Transverse colon (tissue), 4 donors: ENCODE measurements at regions of chr7 and their contacts with region 1.

Region 1: DNA sequence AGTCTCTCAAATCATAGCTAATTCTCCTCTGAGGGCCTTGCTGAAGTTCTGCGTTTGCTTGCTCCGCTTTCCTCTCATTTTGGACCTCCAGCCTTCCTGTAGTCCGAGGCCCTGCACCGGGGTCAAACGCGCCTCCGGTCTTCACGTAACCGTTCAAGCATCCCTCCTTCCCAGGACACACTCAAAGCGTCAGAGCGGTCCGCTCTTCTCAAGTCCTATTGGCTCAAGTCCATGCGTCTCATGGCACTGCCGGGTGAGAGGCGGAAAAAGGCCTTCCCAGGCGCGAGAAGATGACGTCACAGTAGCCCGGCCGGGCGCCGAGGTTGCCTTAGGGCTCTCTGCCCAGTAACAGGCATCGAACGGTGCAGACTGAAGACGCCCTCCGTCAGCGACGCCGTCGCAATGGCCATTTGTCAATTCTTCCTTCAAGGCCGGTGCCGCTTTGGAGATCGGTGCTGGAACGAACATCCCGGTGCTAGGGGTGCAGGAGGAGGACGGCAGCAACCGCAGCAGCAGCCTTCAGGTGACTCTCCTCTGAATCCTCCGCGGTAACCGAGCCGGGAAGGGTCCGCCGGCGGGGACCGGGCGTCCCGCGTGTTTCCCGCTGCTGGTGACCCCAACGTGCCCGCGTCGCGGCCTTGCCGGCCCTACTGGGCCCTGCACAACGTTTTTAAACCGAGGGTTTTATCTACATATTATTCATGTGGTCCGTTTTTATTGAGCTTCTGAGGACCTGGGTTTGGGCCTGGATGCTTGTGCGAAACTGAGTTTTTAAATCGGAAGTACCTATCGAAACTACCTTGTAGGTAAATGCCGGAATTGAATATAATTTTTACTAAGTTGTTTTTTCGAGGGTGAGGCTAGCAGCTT is at the start of gene NUP42:
- DNase-seq: peak; percentile 97
- H3K4me3 ChIP-seq: peak within 1 kb of the TSS; percentile 71 to 90 (median 83)
- H3K27ac ChIP-seq: peak within 1 kb of the TSS; percentile 96 to 97 (median 96)
- H3K4me1 ChIP-seq: peaks cover 8 to 30% (median 16%) of the 10 kb centered on the region in 4 donors
- H3K27me3 ChIP-seq: no peaks in the 10 kb centered on the region
- CTCF ChIP-seq: no peak
- EP300 ChIP-seq: no peak
- POLR2A ChIP-seq: peak; percentile 84
- total RNA-seq, gene NUP42: 27.6 to 47.0 (median 38.3) TPM

Region 2: GRCh38 chr7:23105644-23106056 is 76.3 kb before region 1 on chr7 and contains the start of gene KLHL7:
- in situ Hi-C with region 1: loop called in 2 of 4 experiments (anchors 10 kb)
- intact Hi-C with region 1: loop called (anchors 5 kb)
- DNase-seq: peak; percentile 98
- H3K4me3 ChIP-seq: peak within 1 kb of the TSS; percentile 67 to 94 (median 88)
- H3K27ac ChIP-seq: peak within 1 kb of the TSS; percentile 90 to 99 (median 94)
- H3K4me1 ChIP-seq: peaks cover 5 to 33% (median 17%) of the 10 kb centered on the region in 4 donors
- H3K27me3 ChIP-seq: no peaks in the 10 kb centered on the region
- CTCF ChIP-seq: peak in 1 of 5 experiments; percentile 4
- EP300 ChIP-seq: no peak
- POLR2A ChIP-seq: peak; percentile 94
- total RNA-seq, gene KLHL7: 9.2 to 27.4 (median 25.3) TPM

Region 3: GRCh38 chr7:23216021-23216420 is 34.1 kb after region 1 on chr7:
- in situ Hi-C with region 1: no loop called
- intact Hi-C with region 1: no loop called
- DNase-seq: peak; percentile 26
- H3K4me3 ChIP-seq: no peak overlapping the region
- H3K27ac ChIP-seq: no peak overlapping the region
- H3K4me1 ChIP-seq: peaks cover 0 to 17% (median 2%) of the 10 kb centered on the region in 4 donors
- H3K27me3 ChIP-seq: no peaks in the 10 kb centered on the region
- CTCF ChIP-seq: no peak
- EP300 ChIP-seq: no peak
- POLR2A ChIP-seq: no peak

Region 4: DNA sequence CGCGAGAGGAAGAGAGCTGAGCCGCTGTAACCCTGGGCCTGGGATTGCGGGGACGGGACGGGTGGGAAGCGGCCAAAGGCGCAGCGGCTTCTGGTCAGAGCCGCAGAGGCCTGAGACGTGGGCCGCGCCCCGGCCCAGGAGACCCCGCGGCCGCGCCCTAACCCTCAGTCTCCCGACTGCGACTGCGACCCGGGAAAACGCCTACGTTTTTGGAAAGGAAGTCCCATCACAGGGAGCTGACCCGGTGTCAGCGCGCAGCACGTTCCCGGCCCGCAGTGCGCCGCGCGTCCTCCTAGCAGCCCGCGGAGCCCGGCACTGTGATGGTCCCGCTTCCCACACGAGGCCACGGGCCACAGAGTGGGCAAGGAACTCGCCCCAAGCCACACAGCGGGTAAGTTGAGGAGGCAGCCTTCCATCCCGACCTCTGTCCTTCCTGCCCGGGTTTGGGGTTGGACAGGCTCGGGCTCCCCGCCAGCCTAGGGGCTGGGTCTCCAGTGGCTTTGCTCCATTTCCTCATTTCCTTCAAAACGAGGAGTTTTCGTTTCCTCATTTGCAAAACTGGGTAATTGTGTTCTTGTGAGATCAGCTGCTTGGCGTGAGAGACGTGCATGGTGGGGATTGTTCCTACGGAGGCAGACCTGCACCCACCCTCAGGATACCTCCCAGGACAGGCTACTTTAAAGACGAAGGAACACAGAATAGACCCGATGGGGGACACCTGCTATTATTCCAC is 65.8 kb after region 1 on chr7:
- in situ Hi-C with region 1: no loop called
- intact Hi-C with region 1: loop called (anchors 10 kb)
- DNase-seq: peak; percentile 21
- H3K4me3 ChIP-seq: peak overlapping the region in 3 of 4 donors; percentile 14 to 42 (median 25)
- H3K27ac ChIP-seq: peak overlapping the region; percentile 57 to 76 (median 70)
- H3K4me1 ChIP-seq: peaks cover 0 to 2% (median 0%) of the 10 kb centered on the region in 4 donors
- H3K27me3 ChIP-seq: peaks cover 59% of the 10 kb centered on the region
- CTCF ChIP-seq: no peak
- EP300 ChIP-seq: no peak
- POLR2A ChIP-seq: peak; percentile 18

Region 5: DNA sequence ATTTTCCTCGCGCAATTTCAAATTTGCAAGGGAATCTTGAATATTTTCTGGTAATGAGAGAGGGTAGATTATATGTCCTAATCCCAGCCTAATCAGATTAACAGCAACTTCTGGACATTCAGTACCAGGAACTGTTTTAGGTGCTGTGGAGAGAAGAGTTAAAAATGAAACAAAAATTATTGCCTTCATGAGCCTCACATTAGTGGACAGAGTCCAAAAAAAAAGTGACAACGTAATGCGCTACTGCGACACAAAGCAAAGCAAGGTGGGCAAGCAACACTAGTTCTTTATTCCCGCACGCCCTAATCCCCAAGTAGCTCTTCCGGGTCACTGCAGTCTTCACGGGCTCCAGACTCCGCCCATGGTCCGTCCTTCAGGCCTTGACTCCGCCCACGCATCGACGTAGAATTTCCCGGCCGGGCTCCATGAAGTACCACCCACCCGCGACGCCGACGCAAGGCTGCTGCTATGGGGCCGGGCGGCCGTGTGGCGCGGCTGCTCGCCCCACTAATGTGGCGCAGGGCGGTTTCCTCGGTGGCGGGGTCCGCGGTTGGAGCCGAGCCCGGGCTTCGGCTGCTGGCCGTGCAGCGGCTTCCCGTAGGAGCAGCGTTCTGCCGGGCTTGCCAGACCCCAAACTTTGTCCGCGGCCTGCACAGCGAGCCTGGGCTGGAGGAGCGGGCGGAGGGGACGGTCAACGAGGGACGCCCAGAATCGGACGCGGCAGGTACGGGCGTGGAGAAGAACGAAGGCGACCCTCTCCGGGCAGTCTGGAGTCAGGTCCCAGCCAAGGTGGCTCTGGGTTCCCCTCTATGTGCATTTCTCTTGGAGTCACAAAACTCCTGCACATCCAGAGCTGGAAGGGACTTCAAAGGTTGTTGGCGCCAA is 117.2 kb after region 1 on chr7 and contains the start of gene MALSU1:
- in situ Hi-C with region 1: loop called in 1 of 4 experiments (anchors 10 kb)
- intact Hi-C with region 1: no loop called
- DNase-seq: peak; percentile 98
- H3K4me3 ChIP-seq: peak within 1 kb of the TSS; percentile 72 to 97 (median 82)
- H3K27ac ChIP-seq: peak within 1 kb of the TSS; percentile 83 to 91 (median 88)
- H3K4me1 ChIP-seq: peaks cover 8 to 43% (median 15%) of the 10 kb centered on the region in 4 donors
- H3K27me3 ChIP-seq: no peaks in the 10 kb centered on the region
- CTCF ChIP-seq: no peak
- EP300 ChIP-seq: no peak
- POLR2A ChIP-seq: peak; percentile 88
- total RNA-seq, gene MALSU1: 26.2 to 165 (median 50.1) TPM in 3 of 4 donors, not detected in the other